PC-9 (cell line): ENCODE measurements at regions of chr18 and their contacts with region 1.

Region 1: DNA sequence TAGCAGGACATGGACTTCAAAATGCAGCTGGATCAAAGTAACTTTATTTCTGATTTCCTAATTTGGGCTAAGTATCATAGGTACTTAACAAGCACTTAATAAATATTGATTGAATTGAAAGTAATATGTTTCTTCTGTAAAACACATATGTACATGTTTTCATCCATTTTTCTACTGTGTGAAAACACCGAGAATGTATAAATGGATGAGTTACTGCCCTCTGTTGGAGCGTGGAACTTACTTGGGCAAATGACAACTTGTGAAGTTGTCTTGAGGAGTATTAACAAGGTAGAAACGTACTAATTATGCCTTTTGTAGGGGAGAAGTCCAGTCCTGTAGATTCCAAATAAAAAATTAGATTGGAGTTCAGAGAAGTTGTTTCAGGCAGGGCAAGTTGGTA is 87.2 kb downstream of the PHLPP1 start:
- DNase-seq: no peak
- H3K4me3 ChIP-seq: no peak overlapping the region
- H3K27ac ChIP-seq: no peak overlapping the region
- H3K4me1 ChIP-seq: peaks cover 45% of the 10 kb centered on the region
- H3K27me3 ChIP-seq: no peaks in the 10 kb centered on the region
- CTCF ChIP-seq: no peak

Region 2: DNA sequence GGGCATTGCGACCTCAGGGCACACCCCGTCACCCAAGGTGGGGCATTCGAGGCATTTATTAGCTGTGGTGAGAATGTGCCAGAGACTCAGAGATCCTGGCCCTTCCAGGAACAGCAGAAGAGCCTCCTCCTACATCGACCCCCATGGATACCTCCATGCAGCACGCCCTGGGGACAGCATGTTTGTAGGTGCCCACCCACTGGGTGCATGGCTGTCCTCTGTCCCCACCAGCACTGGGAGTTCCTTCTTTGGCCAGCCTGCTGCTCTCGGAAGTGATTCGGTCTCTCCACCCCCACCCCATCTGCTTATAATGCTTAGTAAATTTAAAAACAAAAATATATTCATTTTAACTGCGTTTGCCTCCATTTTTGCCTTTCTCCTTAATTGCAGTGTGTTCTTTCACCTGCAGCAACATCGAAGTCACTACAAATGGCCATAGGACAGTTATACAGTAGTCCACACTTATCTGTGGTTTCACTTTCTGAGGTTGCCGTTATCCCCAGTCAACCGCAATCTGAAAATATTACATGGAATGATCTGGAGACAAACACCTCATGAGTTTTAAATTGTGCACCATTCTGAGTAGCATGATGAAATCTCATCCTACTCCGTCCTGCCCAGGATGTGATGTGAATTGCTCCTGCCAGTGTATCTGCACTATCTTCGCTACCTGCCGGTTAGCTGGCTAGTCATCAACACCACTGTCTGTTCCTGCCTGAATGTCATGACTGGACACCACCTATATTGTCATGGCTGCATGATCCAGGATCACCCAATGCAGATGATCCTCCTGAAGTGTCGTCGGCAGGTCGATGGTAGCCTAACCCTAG is 309.3 kb before region 1 on chr18:
- CTCF ChIA-PET with region 1: no interaction called
- POLR2A ChIA-PET with region 1: no interaction called
- intact Hi-C with region 1: no loop called
- DNase-seq: no peak
- H3K4me3 ChIP-seq: no peak overlapping the region
- H3K27ac ChIP-seq: no peak overlapping the region
- H3K4me1 ChIP-seq: no peaks in the 10 kb centered on the region
- H3K27me3 ChIP-seq: no peaks in the 10 kb centered on the region
- CTCF ChIP-seq: no peak

Region 3: GRCh38 chr18:62596145-62597005 is 206.1 kb before region 1 on chr18:
- CTCF ChIA-PET with region 1: no interaction called
- POLR2A ChIA-PET with region 1: no interaction called
- intact Hi-C with region 1: no loop called
- DNase-seq: peak in 1 of 2 experiments; percentile 18
- H3K4me3 ChIP-seq: no peak overlapping the region
- H3K27ac ChIP-seq: no peak overlapping the region
- H3K4me1 ChIP-seq: no peaks in the 10 kb centered on the region
- H3K27me3 ChIP-seq: no peaks in the 10 kb centered on the region
- CTCF ChIP-seq: no peak

Region 4: GRCh38 chr18:62763101-62763521 is 39.4 kb before region 1 on chr18:
- CTCF ChIA-PET with region 1: no interaction called
- POLR2A ChIA-PET with region 1: no interaction called
- intact Hi-C with region 1: loop called (anchors 2 kb)
- DNase-seq: peak; percentile 27 to 66
- H3K4me3 ChIP-seq: no peak overlapping the region
- H3K27ac ChIP-seq: peak overlapping the region; percentile 31
- H3K4me1 ChIP-seq: peaks cover 60% of the 10 kb centered on the region
- H3K27me3 ChIP-seq: no peaks in the 10 kb centered on the region
- CTCF ChIP-seq: no peak

Region 5: GRCh38 chr18:62957885-62958472 is 155.5 kb after region 1 on chr18:
- CTCF ChIA-PET with region 1: no interaction called
- POLR2A ChIA-PET with region 1: no interaction called
- intact Hi-C with region 1: loop called (anchors 5 kb)
- DNase-seq: peak in 1 of 2 experiments; percentile 34
- H3K4me3 ChIP-seq: no peak overlapping the region
- H3K27ac ChIP-seq: no peak overlapping the region
- H3K4me1 ChIP-seq: no peaks in the 10 kb centered on the region
- H3K27me3 ChIP-seq: no peaks in the 10 kb centered on the region
- CTCF ChIP-seq: peak; percentile 70

Region 6: GRCh38 chr18:62992967-62993366 is 190.4 kb after region 1 on chr18:
- CTCF ChIA-PET with region 1: interaction called, 13 read pairs
- POLR2A ChIA-PET with region 1: no interaction called
- intact Hi-C with region 1: no loop called
- DNase-seq: peak; percentile 24 to 80
- H3K4me3 ChIP-seq: no peak overlapping the region
- H3K27ac ChIP-seq: no peak overlapping the region
- H3K4me1 ChIP-seq: peaks cover 19% of the 10 kb centered on the region
- H3K27me3 ChIP-seq: no peaks in the 10 kb centered on the region
- CTCF ChIP-seq: no peak

Region 7: GRCh38 chr18:63216516-63217311 is 414.2 kb after region 1 on chr18:
- CTCF ChIA-PET with region 1: no interaction called
- POLR2A ChIA-PET with region 1: no interaction called
- intact Hi-C with region 1: no loop called
- DNase-seq: no peak
- H3K4me3 ChIP-seq: no peak overlapping the region
- H3K27ac ChIP-seq: no peak overlapping the region
- H3K4me1 ChIP-seq: no peaks in the 10 kb centered on the region
- H3K27me3 ChIP-seq: no peaks in the 10 kb centered on the region
- CTCF ChIP-seq: no peak